ENCODE measurements at regions of chr11 and their contacts with region 1.

Region 1: DNA sequence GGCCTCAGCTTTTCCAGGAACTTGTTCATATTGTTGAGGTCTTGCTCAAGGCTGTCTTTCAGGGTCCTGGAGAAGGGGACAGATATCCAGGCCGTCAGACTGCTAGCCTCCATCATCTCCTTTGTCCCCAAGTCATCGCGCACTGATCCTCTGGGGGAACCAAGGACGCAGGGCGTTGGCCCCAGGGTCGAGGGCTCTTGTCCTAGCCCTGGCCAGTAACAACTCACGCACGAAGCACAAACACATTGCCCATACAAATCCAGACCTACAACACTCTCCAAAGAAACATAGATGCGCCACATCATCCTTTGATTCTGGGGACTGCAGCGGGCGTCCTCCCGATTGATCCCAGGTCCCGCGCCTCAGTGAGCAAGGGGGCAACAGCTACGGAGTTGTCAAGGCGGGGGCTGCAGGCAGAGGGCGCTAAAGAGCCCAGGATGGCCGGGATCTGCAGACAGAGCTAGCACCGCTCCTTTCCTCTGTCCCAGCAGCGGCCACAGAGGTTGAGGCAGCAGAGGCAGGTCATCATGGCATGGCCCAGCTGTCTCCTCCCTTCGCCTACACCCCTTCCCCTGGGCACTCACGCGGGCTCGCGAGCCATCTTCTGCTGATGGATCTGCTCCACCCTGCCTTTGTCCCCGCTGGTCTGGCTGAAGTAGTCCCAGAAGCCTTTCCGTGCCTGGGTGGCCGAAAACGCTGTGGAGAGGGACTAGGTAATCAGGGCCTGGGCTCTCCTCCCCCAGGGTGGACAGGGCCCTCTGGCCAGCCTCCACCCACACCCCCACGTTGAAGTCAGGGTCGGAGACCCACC is 472 bp downstream of the APOA5 start:
- DNase-seq: peak; percentile 68 to 88 (median 85)
- H3K4me3 ChIP-seq: no peak overlapping the region
- H3K27ac ChIP-seq: no peak overlapping the region
- H3K4me1 ChIP-seq: peaks cover 9% of the 10 kb centered on the region
- H3K27me3 ChIP-seq: no peaks in the 10 kb centered on the region
- CTCF ChIP-seq: peak; percentile 68 to 85 (median 82)
- EP300 ChIP-seq: no peak
- POLR2A ChIP-seq: no peak

Region 2: GRCh38 chr11:116829525-116830183 is 38.4 kb after region 1 on chr11 and contains the start of gene APOC3:
- intact Hi-C with region 1: loop called in 1 of 4 experiments (anchors 5 kb)
- DNase-seq: peak in 2 of 5 donors; percentile 37 to 52
- H3K4me3 ChIP-seq: no peak within 1 kb of the TSS
- H3K27ac ChIP-seq: peak within 1 kb of the TSS; percentile 14 to 37
- H3K4me1 ChIP-seq: peaks cover 6% of the 10 kb centered on the region
- H3K27me3 ChIP-seq: no peaks in the 10 kb centered on the region
- CTCF ChIP-seq: no peak
- EP300 ChIP-seq: no peak
- POLR2A ChIP-seq: no peak
- total RNA-seq, gene APOC3: 2.7 to 18.0 (median 4.3) TPM in 3 of 7 donors, not detected in the others

Region 3: DNA sequence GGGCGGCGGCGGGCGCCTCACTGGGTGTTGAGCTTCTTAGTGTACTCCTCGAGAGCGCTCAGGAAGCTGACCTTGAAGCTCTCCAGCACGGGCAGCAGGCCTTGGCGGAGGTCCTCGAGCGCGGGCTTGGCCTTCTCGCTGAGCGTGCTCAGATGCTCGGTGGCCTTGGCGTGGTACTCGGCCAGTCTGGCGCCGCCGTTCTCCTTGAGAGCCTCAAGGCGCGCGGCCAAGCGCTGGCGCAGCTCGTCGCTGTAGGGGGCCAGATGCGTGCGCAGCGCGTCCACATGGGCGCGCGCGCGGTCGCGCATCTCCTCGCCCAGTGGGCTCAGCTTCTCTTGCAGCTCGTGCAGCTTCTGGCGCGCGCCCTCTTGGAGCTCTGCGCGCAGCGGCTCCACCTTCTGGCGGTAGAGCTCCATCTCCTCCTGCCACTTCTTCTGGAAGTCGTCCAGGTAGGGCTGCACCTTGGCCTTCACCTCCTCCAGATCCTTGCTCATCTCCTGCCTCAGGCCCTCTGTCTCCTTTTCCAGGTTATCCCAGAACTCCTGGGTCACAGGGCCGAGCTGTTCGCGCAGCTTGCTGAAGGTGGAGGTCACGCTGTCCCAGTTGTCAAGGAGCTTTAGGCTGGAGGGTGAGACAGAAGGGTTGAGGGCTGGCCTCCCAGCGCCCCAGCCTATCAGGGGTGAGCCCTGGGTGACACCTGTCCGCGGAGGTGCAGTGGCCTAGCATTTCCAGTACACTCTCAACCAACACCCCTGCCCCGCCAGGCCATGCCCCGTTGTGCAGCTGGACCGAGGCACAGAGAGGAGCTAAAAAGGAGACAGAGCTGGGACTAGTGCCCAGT is 44.8 kb after region 1 on chr11:
- intact Hi-C with region 1: loop called (anchors 5 kb)
- DNase-seq: peak; percentile 96 to 100 (median 99)
- H3K4me3 ChIP-seq: peak overlapping the region; percentile 23
- H3K27ac ChIP-seq: peak overlapping the region; percentile 63 to 80
- H3K4me1 ChIP-seq: peaks cover 33% of the 10 kb centered on the region
- H3K27me3 ChIP-seq: no peaks in the 10 kb centered on the region
- CTCF ChIP-seq: peak; percentile 52 to 69 (median 53)
- EP300 ChIP-seq: no peak
- POLR2A ChIP-seq: no peak

Region 4: GRCh38 chr11:117107701-117108590 is 316.7 kb after region 1 on chr11:
- intact Hi-C with region 1: loop called (anchors 2 kb)
- DNase-seq: no peak
- H3K4me3 ChIP-seq: no peak overlapping the region
- H3K27ac ChIP-seq: no peak overlapping the region
- H3K4me1 ChIP-seq: no peaks in the 10 kb centered on the region
- H3K27me3 ChIP-seq: no peaks in the 10 kb centered on the region
- CTCF ChIP-seq: no peak
- EP300 ChIP-seq: no peak
- POLR2A ChIP-seq: no peak

Region 5: GRCh38 chr11:117232092-117232878 is 441.1 kb after region 1 on chr11 and contains the start of gene RNF214:
- intact Hi-C with region 1: loop called in 2 of 4 experiments (anchors 5 to 10 kb)
- DNase-seq: peak; percentile 75 to 88 (median 83)
- H3K4me3 ChIP-seq: peak within 1 kb of the TSS; percentile 63
- H3K27ac ChIP-seq: peak within 1 kb of the TSS; percentile 79 to 93
- H3K4me1 ChIP-seq: peaks cover 1% of the 10 kb centered on the region
- H3K27me3 ChIP-seq: no peaks in the 10 kb centered on the region
- CTCF ChIP-seq: peak; percentile 72 to 99 (median 96)
- EP300 ChIP-seq: no peak
- POLR2A ChIP-seq: peak; percentile 78
- total RNA-seq, gene RNF214: 9.7 to 40.9 (median 29.3) TPM